ENCODE measurements at regions of chr17 and their contacts with region 1.

Region 1: GRCh38 chr17:50865984-50866774 is at the start of gene TOB1:
- DNase-seq: peak; percentile 94 to 100 (median 98)

Region 2: GRCh38 chr17:50785946-50786570 is 80.1 kb before region 1 on chr17:
- intact Hi-C with region 1: no loop called
- DNase-seq: peak in 3 of 10 donors; percentile 21 to 34 (median 31)

Region 3: GRCh38 chr17:50919321-50920085 is 53.3 kb after region 1 on chr17:
- intact Hi-C with region 1: loop called (anchors 2 kb)
- DNase-seq: peak; percentile 94 to 99 (median 97)

Region 4: GRCh38 chr17:50931144-50931908 is 65.1 kb after region 1 on chr17:
- intact Hi-C with region 1: loop called (anchors 5 kb)
- DNase-seq: peak; percentile 79 to 98 (median 89)

Region 5: DNA sequence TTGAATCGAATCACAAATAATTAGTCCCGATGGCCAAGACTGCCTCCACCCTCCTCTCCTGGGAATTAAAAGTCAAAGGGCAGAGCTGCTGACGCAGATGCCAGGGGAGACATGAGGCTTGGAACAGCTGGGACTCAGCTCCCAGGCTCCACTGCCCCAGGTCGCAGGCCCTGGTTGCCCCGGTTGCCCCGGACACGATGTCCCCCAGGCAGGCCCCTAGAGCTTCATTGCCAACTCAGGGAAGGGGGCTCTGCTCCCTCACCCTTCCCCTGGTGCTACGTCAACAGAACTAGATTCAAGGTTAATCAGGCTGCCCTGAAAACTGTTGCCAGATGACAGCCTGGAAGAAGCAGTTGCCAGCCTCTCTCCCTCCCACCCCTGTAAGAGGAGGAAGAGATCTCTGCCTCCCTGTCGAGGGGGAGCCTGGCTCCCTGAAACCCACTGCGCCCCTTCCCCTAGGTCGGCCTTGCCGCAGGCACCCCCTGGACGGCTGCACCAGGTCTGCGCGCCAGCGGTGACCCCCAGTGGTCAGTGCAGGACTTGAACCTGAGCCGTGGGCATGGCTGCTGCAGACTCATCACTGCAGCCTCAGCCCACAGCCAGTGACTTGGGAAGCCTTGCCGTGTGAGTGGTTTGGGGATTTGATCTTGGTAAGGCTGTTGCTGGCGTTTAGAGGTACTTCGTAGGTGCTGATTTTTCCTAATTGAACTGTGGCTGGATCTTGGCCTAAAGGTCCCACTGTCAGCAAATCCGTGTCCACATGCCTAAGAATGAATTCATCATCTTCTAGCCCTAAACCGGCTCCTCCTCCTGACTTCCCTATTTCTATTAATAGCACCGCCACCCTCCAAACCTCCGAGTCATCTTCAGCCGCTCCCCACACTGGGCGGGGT is 84.1 kb after region 1 on chr17:
- intact Hi-C with region 1: loop called (anchors 1 kb)
- DNase-seq: peak; percentile 65 to 97 (median 79)

Region 6: GRCh38 chr17:51056813-51057510 is 190.8 kb after region 1 on chr17:
- intact Hi-C with region 1: loop called (anchors 10 kb)
- DNase-seq: peak in 1 of 10 donors; percentile 35

Measured in posterior cingulate gyrus (tissue), 11 donors.